ENCODE measurements at regions of chr2 and their contacts with region 1.

Region 1: DNA sequence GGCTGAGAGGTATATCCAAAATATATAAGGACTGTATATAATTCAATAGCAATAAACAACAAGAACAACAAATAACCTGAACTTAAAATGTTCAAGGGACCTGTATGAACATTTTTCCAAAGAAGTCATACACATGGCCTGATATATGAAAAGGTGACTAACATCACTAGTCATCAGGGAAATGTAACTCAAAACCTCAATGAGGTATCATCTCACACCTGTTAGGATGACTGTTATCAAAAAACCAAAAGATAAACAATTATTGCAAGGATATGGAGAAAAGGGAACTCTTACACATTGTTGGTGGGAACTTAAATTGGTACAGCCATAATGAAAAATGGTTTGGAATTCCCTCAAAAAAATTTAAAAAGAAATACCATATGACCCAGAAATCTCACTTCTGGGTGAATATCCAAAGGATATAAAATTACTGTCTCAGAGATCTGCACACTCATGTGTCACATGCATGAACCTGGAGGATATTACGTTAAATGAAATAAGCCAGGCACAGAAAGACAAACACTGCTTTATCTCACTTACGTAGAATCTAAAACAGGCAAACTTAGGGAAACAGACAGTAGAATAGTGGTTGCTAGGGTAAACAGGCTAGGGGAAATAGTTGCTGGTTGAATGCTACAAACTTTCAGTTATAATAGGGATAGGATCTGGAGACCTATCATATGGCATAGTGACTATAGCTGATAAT is 334.5 kb upstream of the MMADHC start:
- DNase-seq: no peak
- ATAC-seq: no peak

Region 2: GRCh38 chr2:149767516-149767974 is 154.5 kb before region 1 on chr2:
- intact Hi-C with region 1: no loop called
- DNase-seq: no peak
- ATAC-seq: peak in 1 of 2 donors; percentile 66

Region 3: DNA sequence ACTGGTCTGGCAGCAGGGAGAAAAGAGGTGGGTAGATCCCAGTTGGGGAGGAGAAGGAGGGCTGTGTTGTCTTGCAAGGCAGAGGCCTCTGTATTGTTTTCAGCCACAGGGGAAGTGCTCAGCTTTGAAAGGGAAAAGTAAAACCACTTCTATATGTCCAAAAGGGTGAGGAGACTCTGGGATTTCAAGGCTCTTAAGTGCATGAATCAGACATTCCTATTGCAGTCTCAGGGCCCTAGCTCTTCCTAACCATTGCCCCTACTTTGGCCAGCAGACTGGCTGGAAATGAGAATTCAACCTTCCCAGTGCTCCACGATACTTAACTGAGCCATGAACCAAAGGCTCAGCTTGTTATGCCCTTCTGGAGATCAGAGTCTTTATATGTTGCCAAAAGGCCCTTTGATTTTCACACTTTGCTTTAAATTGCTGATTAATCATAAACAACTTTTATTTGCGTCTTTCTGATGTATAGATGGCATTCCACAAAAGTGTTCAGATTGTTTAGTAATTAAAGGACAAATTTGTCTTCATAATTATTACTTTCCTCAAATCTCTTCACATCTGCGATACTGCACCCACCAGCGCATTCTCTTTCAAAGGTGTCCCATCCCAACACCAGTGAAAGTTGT is 20.7 kb before region 1 on chr2:
- intact Hi-C with region 1: loop called in 1 of 2 experiments (anchors 1 kb)
- DNase-seq: no peak
- ATAC-seq: no peak